Gastrocnemius medialis (tissue), 4 donors: ENCODE measurements at regions of chr4 and their contacts with region 1.

Region 1: GRCh38 chr4:163494360-163495162 is at the start of gene TMA16:
- DNase-seq: peak; percentile 53 to 74
- ATAC-seq: peak; percentile 94 to 96
- H3K4me3 ChIP-seq: peak within 1 kb of the TSS; percentile 80 to 87 (median 82)
- H3K27ac ChIP-seq: peak within 1 kb of the TSS; percentile 75 to 87 (median 86)
- H3K4me1 ChIP-seq: peaks cover 9 to 13% of the 10 kb centered on the region in 2 donors
- H3K27me3 ChIP-seq: no peaks in the 10 kb centered on the region
- CTCF ChIP-seq: no peak
- POLR2A ChIP-seq: peak; percentile 16 to 43
- total RNA-seq, gene TMA16: 4.0 to 15.4 (median 8.7) TPM

Region 2: GRCh38 chr4:162170509-162170908 is 1324.1 kb before region 1 on chr4:
- in situ Hi-C with region 1: no loop called
- intact Hi-C with region 1: no loop called
- DNase-seq: no peak
- ATAC-seq: no peak
- H3K4me3 ChIP-seq: no peak overlapping the region
- H3K27ac ChIP-seq: no peak overlapping the region
- H3K4me1 ChIP-seq: no peaks in the 10 kb centered on the region
- H3K27me3 ChIP-seq: peaks cover 0 to 1% (median 0%) of the 10 kb centered on the region in 3 donors
- CTCF ChIP-seq: no peak
- POLR2A ChIP-seq: no peak

Region 3: DNA sequence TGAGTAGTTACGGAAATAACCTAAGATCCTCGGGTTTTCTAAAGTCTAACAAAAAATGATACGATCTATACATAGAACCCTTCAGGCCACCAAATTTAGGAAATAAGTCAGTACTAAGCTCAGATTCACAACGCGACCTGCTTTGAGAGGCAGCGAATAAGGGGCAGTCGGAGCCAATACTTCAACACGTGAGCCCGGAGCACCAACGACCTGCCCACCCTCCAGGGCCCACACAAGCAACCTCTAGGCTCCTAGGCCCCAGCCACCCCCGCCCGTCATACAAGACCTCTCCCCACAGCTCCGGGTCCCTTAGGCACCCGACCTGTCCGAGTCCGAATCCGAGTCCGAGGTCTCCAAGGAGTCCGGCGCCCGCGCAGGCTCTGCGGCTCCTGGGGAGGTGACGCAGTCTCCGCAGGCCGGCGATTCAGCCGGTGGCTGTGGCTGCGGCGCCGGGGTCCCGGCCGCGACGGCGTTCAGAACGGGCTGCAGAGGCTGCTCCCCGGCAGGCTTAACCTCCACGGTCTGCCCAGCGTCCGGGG is 328.5 kb before region 1 on chr4:
- in situ Hi-C with region 1: loop called in 1 of 4 experiments (anchors 25 kb)
- intact Hi-C with region 1: no loop called
- DNase-seq: peak; percentile 20 to 49
- ATAC-seq: peak; percentile 40 to 64
- H3K4me3 ChIP-seq: peak overlapping the region; percentile 71 to 99 (median 84)
- H3K27ac ChIP-seq: peak overlapping the region; percentile 87 to 97 (median 93)
- H3K4me1 ChIP-seq: peaks cover 22 to 29% of the 10 kb centered on the region in 2 donors
- H3K27me3 ChIP-seq: no peaks in the 10 kb centered on the region
- CTCF ChIP-seq: no peak
- POLR2A ChIP-seq: no peak

Region 4: DNA sequence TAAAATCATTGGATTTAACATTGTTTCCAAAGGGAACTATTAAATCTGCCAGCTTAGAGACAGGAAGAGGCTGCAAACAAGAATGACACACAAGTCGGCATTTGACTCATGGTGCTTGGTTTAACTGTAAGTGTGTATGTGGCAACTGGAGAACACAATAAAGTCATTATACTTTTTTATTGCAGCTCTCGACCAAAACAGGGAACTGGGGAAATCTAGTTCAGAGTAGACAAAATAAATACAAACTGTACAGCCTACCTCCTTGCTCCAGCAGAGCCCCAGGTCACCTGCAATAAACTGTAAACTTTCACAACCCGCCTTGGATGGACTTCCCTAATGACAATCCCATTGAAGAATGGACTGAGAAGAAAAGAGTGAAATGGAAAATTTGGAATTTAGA is 126.9 kb before region 1 on chr4:
- in situ Hi-C with region 1: no loop called
- intact Hi-C with region 1: no loop called
- DNase-seq: no peak
- ATAC-seq: no peak
- H3K4me3 ChIP-seq: no peak overlapping the region
- H3K27ac ChIP-seq: no peak overlapping the region
- H3K4me1 ChIP-seq: no peaks in the 10 kb centered on the region
- H3K27me3 ChIP-seq: no peaks in the 10 kb centered on the region
- CTCF ChIP-seq: no peak
- POLR2A ChIP-seq: no peak

Region 5: DNA sequence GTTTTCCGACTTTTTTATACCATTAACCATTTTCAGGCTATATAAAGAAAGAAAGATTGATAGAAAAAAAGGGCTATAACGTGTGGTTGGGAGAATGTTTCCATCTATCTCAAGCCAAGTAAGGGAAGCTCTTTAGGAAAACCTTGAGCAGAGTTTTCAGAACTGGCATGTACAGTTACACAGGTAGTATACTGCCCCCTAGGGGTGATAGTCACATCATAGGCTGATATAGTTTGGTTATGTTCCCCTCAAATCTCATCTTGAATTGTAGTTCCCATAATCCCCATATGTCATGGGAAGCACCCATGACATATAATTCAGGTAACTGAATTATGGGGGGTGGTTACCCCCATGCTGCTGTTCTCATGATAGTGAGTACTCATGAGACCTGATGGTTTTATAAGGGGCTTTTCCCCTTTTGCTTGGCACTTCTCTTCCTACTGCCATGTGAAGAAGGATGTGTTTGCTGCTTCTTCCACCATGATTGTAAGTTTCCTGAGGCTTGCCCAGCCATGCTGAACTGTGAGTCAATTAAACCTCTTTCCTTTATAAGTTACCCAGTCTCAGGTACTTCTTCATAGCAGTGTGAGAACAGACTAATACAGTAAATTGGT is 186.8 kb after region 1 on chr4:
- in situ Hi-C with region 1: no loop called
- intact Hi-C with region 1: no loop called
- DNase-seq: no peak
- ATAC-seq: no peak
- H3K4me3 ChIP-seq: no peak overlapping the region
- H3K27ac ChIP-seq: no peak overlapping the region
- H3K4me1 ChIP-seq: no peaks in the 10 kb centered on the region
- H3K27me3 ChIP-seq: no peaks in the 10 kb centered on the region
- CTCF ChIP-seq: peak in 2 of 5 experiments; percentile 14 to 33
- POLR2A ChIP-seq: no peak